ENCODE measurements at regions of chr20 and their contacts with region 1.

Region 1: GRCh38 chr20:32902456-32903420 is 44.0 kb downstream of the EFCAB8 start:
- DNase-seq: peak; percentile 68
- ATAC-seq: peak; percentile 87
- H3K4me3 ChIP-seq: no peak overlapping the region
- H3K27ac ChIP-seq: no peak overlapping the region
- H3K4me1 ChIP-seq: no peaks in the 10 kb centered on the region
- H3K27me3 ChIP-seq: no peaks in the 10 kb centered on the region
- CTCF ChIP-seq: peak; percentile 91

Region 2: DNA sequence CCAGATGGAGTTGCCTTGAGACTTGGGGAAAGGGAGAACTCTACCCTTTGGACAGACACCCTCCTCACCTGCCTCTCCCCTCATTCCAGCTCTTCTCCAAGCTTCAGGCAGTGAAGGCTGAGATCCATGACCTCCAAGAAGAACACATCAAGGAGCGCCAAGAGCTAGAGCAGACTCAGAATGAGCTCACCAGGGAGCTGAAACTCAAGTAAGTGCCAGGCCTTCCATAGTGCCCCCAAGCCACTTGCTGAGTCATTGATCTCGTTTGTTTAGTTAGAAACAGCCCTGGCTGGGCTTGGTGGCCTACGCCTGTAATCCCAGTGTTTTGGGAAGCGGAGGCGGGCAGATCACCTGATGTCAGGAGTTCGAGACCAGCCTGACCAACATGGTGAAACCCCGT is 586.1 kb before region 1 on chr20:
- CTCF ChIA-PET with region 1: no interaction called
- POLR2A ChIA-PET with region 1: no interaction called
- intact Hi-C with region 1: no loop called
- DNase-seq: peak; percentile 80
- ATAC-seq: peak; percentile 82
- H3K4me3 ChIP-seq: no peak overlapping the region
- H3K27ac ChIP-seq: peak overlapping the region; percentile 8; the same call in 1 of the 2 replicates
- H3K4me1 ChIP-seq: peaks cover 9% of the 10 kb centered on the region
- H3K27me3 ChIP-seq: no peaks in the 10 kb centered on the region
- CTCF ChIP-seq: no peak

Region 3: GRCh38 chr20:32945710-32946221 is 43.0 kb after region 1 on chr20:
- CTCF ChIA-PET with region 1: interaction called, 13 read pairs
- POLR2A ChIA-PET with region 1: no interaction called
- intact Hi-C with region 1: loop called (anchors 1 kb)
- DNase-seq: peak; percentile 51
- ATAC-seq: peak; percentile 64
- H3K4me3 ChIP-seq: no peak overlapping the region
- H3K27ac ChIP-seq: no peak overlapping the region
- H3K4me1 ChIP-seq: no peaks in the 10 kb centered on the region
- H3K27me3 ChIP-seq: peaks cover 50% of the 10 kb centered on the region
- CTCF ChIP-seq: peak; percentile 70

Region 4: DNA sequence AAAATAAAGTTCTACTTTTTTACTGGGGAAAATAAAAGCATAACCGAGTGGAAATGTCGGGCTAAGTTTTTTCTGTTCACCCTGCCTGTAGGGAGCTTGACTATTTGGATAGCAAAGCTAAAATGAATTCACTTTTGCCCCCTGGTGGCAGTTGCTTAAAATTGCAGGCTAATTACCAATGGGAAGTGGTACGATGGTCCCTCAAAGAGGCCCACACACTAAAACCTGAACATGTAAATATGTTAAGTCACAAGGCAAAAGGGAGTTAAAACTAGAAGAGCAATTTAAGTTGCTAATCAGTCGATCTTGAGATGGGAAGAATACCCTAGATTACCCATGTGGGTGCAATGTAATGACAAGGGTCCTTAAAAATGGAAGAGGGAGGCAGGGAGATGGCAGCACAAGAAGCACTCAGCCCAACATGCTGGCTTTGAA is 102.4 kb after region 1 on chr20:
- CTCF ChIA-PET with region 1: interaction called, 3 read pairs
- POLR2A ChIA-PET with region 1: no interaction called
- intact Hi-C with region 1: loop called (anchors 1 kb)
- DNase-seq: peak; percentile 59
- ATAC-seq: 0 out of 2 replicates have a peak, but pooled peaks have one; percentile 38
- H3K4me3 ChIP-seq: no peak overlapping the region
- H3K27ac ChIP-seq: no peak overlapping the region
- H3K4me1 ChIP-seq: no peaks in the 10 kb centered on the region
- H3K27me3 ChIP-seq: no peaks in the 10 kb centered on the region
- CTCF ChIP-seq: peak; percentile 80

Region 5: GRCh38 chr20:33097001-33097400 is 194.3 kb after region 1 on chr20:
- CTCF ChIA-PET with region 1: interaction called, 6 read pairs
- POLR2A ChIA-PET with region 1: no interaction called
- intact Hi-C with region 1: loop called (anchors 1 kb)
- DNase-seq: no peak
- ATAC-seq: no peak
- H3K4me3 ChIP-seq: no peak overlapping the region
- H3K27ac ChIP-seq: no peak overlapping the region
- H3K4me1 ChIP-seq: no peaks in the 10 kb centered on the region
- H3K27me3 ChIP-seq: peaks cover 6% of the 10 kb centered on the region; the same call in 1 of the 2 replicates
- CTCF ChIP-seq: no peak

Region 6: GRCh38 chr20:33291830-33292355 is 389.2 kb after region 1 on chr20:
- CTCF ChIA-PET with region 1: no interaction called
- POLR2A ChIA-PET with region 1: no interaction called
- intact Hi-C with region 1: loop called (anchors 5 kb)
- DNase-seq: peak; percentile 61
- ATAC-seq: peak; percentile 18; the same call in 1 of the 2 replicates
- H3K4me3 ChIP-seq: no peak overlapping the region
- H3K27ac ChIP-seq: no peak overlapping the region
- H3K4me1 ChIP-seq: no peaks in the 10 kb centered on the region
- H3K27me3 ChIP-seq: peaks cover 40% of the 10 kb centered on the region
- CTCF ChIP-seq: peak; percentile 98

Measured in PC-3 (cell line).